Activated CD8-positive, alpha-beta memory T cell treated with anti-CD3 and anti-CD28 coated beads, Interleukin-2, amount 10 ng/mL, durations not matched to agents 7 days and 5 days (primary cell): ENCODE measurements at regions of chrX and their contacts with region 1.

Region 1: GRCh38 chrX:129925305-129926092 is 19.5 kb downstream of the UTP14A start:
- DNase-seq: peak; percentile 79
- ATAC-seq: peak; percentile 80
- H3K4me3 Mint-ChIP-seq: no peak overlapping the region
- H3K27ac Mint-ChIP-seq: peak overlapping the region; percentile 40
- H3K4me1 Mint-ChIP-seq: peaks cover 4% of the 10 kb centered on the region
- H3K27me3 Mint-ChIP-seq: no peaks in the 10 kb centered on the region

Region 2: DNA sequence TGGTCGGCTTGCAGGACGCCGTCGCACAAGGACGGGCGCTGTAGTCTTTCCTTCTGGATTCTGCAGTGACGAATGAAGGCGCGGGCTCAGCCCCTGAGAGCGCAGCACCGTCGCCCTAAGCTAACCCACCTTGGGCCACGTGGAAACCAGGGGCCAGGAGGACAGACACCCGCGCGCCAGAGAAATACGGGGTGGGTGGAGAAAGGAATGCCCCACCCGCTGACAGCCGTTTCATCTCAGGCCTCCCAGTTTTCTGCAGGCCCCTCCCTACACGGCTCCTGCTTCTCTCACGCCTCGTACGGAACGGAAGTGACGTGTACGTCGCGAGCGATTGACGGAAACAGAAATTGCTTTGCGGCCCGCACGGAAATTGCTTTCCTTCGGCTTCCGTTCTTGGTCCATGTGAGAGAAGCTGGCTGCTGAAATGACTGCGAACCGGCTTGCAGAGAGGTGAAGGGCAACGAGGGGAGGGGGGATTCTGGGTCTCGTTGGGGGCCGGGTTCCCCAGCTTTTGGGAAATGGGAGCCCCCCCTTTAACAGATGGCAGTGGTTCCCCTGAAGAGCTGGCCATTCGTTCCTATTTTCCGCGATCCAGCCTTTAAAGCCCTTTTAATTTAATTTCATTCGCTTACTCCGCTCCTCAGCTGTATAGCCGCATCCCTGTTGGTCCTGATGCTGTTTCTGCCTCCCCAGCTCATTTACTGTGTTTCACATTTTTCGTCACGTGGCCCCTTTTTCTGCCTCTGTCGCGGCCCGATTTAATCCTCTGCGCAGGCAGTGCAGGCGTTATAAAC is 19.5 kb before region 1 on chrX and contains the start of gene UTP14A:
- CTCF ChIA-PET with region 1: interaction called, 10 read pairs
- DNase-seq: peak; percentile 93
- ATAC-seq: peak; percentile 99
- H3K4me3 Mint-ChIP-seq: peak within 1 kb of the TSS; percentile 91
- H3K27ac Mint-ChIP-seq: peak within 1 kb of the TSS; percentile 93
- H3K4me1 Mint-ChIP-seq: peaks cover 28% of the 10 kb centered on the region
- H3K27me3 Mint-ChIP-seq: no peaks in the 10 kb centered on the region
- total RNA-seq, gene UTP14A: 22.8 to 37.0 TPM

Region 3: DNA sequence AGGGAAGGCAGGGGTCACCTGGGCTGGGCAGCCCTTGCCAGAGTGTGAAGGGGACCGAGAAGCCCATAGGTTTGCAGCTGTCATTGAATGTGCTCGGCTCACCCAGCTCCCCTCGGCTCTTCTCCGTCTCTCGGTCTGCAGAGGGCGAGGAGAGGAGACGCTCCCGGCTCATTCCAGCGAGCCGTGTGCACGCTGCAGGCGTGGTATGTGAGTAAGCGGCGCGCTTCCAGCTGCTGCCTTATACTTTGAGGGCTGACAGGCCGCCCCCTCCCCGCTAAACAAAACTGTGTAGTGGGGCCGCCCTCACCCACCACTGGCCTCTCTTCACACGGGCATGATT is 34.0 kb after region 1 on chrX:
- CTCF ChIA-PET with region 1: no interaction called
- DNase-seq: no peak
- ATAC-seq: no peak
- H3K4me3 Mint-ChIP-seq: no peak overlapping the region
- H3K27ac Mint-ChIP-seq: no peak overlapping the region
- H3K4me1 Mint-ChIP-seq: peaks cover 30% of the 10 kb centered on the region
- H3K27me3 Mint-ChIP-seq: peaks cover 5% of the 10 kb centered on the region

Region 4: DNA sequence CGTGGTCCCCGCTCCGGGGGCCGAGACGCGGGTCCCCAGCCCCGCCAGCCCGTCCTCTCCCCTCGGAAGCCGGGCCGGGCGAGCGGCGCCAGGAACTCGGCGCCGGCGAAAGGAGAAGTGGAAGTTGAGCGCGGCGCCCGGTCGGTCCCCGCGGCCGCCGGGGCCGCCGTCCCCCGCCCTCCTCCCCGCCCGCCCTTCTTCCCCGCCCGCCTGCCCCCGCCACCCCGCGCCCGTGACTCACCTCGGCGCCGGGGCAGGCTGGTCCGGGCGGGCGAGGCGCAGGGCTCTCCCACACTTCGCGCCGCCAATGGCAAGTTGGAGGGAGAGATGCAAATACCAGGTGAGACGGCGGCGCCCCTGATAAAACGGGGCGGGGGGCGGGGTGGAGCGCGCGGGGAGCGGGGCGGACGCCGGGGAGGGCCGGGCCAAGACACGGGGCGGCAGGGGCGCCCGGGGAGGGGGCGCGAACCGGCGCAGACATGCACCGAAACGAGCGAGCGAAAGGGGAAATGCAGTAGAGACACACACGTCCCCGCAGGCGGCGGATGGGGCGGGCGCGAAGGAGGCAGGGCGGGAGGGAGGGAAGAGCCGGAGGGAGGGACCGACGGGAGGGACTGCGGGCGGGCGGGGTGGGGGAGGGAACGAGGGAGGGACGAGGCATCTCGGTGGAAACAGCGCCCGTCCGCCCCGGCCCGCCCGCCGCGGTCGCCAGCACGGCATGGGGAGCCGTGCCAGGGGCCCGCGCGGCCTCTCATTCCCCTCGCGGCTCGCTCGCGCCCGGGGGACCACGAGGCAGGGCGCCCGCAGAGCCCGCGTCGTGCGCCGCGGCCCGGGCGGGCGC is 185.1 kb after region 1 on chrX and contains the start of gene ELF4:
- CTCF ChIA-PET with region 1: no interaction called
- DNase-seq: peak; percentile 60
- ATAC-seq: peak; percentile 65
- H3K4me3 Mint-ChIP-seq: peak within 1 kb of the TSS; percentile 93
- H3K27ac Mint-ChIP-seq: peak within 1 kb of the TSS; percentile 94
- H3K4me1 Mint-ChIP-seq: peaks cover 44% of the 10 kb centered on the region
- H3K27me3 Mint-ChIP-seq: no peaks in the 10 kb centered on the region
- total RNA-seq, gene ELF4: 36.2 to 52.7 TPM